Activated T-helper 2 cell treated with anti-CD3 and anti-CD28 coated beads, Interferon-gamma antibody, Interleukin-2, Interleukin-4, amounts not matched to agents 10 μg/mL and 5 μg/mL and 100 μg/mL, durations not matched to agents 14 hours and 24 hours and 36 hours (primary cell): ENCODE measurements at regions of chr11 and their contacts with region 1.

Region 1: GRCh38 chr11:64304316-64305072 is 830 bp upstream of the ESRRA start:
- DNase-seq: peak; percentile 88
- H3K4me3 Mint-ChIP-seq: peak overlapping the region; percentile 91
- H3K27ac Mint-ChIP-seq: peak overlapping the region; percentile 99
- H3K4me1 Mint-ChIP-seq: peaks cover 21% of the 10 kb centered on the region
- H3K27me3 Mint-ChIP-seq: peaks cover 14% of the 10 kb centered on the region

Region 2: DNA sequence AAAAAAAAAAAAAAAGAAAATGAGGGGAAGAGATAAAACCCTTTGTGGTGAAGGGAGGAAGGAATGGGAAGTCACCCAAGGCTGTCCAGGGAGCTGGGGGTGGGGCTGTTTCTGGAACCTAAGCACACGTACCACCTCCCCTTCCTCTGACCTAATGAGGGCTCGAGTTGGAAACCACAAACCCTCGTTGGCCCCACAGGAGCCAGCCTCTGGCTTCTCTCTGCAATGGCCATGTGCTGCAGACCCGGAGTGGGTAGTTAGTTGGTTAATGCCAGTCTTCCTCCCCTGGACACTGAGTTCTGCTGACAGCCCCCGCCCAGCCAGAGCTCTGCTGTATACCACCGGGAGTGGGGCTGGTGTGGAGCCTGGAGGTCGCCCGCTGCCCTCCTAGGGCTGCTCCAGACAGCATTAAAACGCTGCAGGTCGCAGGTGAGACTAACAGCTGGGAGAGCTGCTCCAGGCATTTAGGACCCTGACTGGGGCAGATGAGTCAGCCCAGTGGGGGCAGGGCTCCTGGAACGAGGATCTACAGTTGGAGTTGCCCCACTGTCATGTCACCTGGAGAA is 798.5 kb before region 1 on chr11 and contains the start of gene LGALS12:
- intact Hi-C with region 1: no loop called
- DNase-seq: no peak
- H3K4me3 Mint-ChIP-seq: no peak within 1 kb of the TSS
- H3K27ac Mint-ChIP-seq: no peak within 1 kb of the TSS
- H3K4me1 Mint-ChIP-seq: peaks cover 13% of the 10 kb centered on the region
- H3K27me3 Mint-ChIP-seq: peaks cover 8% of the 10 kb centered on the region
- total RNA-seq, gene LGALS12: 1.1 and 1.4 TPM in 2 replicates

Region 3: GRCh38 chr11:64185816-64186498 is 118.5 kb before region 1 on chr11 and contains the start of gene STIP1:
- intact Hi-C with region 1: loop called (anchors 2 kb)
- DNase-seq: peak; percentile 99
- H3K4me3 Mint-ChIP-seq: peak within 1 kb of the TSS; percentile 94
- H3K27ac Mint-ChIP-seq: peak within 1 kb of the TSS; percentile 98
- H3K4me1 Mint-ChIP-seq: peaks cover 33% of the 10 kb centered on the region
- H3K27me3 Mint-ChIP-seq: no peaks in the 10 kb centered on the region
- total RNA-seq, gene STIP1: 480 and 484 TPM in 2 replicates

Region 4: GRCh38 chr11:64240394-64241174 is 63.9 kb before region 1 on chr11 and contains the start of gene FKBP2:
- intact Hi-C with region 1: loop called (anchors 1 kb)
- DNase-seq: peak; percentile 98
- H3K4me3 Mint-ChIP-seq: peak within 1 kb of the TSS; percentile 94
- H3K27ac Mint-ChIP-seq: peak within 1 kb of the TSS; percentile 93
- H3K4me1 Mint-ChIP-seq: peaks cover 21% of the 10 kb centered on the region
- H3K27me3 Mint-ChIP-seq: no peaks in the 10 kb centered on the region
- total RNA-seq, gene FKBP2: 36.6 and 37.1 TPM in 2 replicates

Region 5: GRCh38 chr11:64269380-64270234 is 34.9 kb before region 1 on chr11:
- intact Hi-C with region 1: loop called (anchors 1 kb)
- DNase-seq: peak; percentile 97
- H3K4me3 Mint-ChIP-seq: peak overlapping the region; percentile 91
- H3K27ac Mint-ChIP-seq: peak overlapping the region; percentile 84
- H3K4me1 Mint-ChIP-seq: peaks cover 15% of the 10 kb centered on the region
- H3K27me3 Mint-ChIP-seq: no peaks in the 10 kb centered on the region

Region 6: DNA sequence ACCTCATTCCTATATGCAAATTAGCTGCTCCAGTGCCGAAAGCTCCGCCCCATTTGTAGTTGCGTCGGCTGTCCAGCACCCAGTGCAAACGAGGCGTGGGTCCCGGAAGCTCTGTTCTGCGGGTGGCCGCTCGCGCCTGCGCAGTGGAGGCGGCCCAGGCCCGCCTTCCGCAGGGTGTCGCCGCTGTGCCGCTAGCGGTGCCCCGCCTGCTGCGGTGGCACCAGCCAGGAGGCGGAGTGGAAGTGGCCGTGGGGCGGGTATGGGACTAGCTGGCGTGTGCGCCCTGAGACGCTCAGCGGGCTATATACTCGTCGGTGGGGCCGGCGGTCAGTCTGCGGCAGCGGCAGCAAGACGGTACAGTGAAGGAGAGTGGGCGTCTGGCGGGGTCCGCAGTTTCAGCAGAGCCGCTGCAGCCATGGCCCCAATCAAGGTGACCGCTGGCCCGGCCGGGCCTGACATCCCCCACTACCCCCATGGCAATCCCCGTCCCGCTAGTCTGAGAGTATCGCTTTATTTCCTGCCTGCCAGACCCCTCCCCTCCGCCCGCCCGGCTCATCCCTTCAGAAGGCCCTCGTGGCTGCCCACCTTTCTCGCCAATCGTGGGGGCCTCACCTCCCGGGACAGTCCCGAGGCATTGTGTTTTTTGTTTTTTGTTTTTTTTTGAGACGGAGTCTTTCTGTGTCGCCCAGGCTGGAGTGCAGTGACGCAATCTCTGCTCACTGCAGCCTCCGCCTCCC is 13.6 kb after region 1 on chr11 and contains the start of gene PRDX5:
- intact Hi-C with region 1: loop called (anchors 1 kb)
- DNase-seq: peak; percentile 95
- H3K4me3 Mint-ChIP-seq: peak within 1 kb of the TSS; percentile 96
- H3K27ac Mint-ChIP-seq: peak within 1 kb of the TSS; percentile 99
- H3K4me1 Mint-ChIP-seq: peaks cover 30% of the 10 kb centered on the region
- H3K27me3 Mint-ChIP-seq: no peaks in the 10 kb centered on the region
- total RNA-seq, gene PRDX5: 112 and 118 TPM in 2 replicates

Region 7: DNA sequence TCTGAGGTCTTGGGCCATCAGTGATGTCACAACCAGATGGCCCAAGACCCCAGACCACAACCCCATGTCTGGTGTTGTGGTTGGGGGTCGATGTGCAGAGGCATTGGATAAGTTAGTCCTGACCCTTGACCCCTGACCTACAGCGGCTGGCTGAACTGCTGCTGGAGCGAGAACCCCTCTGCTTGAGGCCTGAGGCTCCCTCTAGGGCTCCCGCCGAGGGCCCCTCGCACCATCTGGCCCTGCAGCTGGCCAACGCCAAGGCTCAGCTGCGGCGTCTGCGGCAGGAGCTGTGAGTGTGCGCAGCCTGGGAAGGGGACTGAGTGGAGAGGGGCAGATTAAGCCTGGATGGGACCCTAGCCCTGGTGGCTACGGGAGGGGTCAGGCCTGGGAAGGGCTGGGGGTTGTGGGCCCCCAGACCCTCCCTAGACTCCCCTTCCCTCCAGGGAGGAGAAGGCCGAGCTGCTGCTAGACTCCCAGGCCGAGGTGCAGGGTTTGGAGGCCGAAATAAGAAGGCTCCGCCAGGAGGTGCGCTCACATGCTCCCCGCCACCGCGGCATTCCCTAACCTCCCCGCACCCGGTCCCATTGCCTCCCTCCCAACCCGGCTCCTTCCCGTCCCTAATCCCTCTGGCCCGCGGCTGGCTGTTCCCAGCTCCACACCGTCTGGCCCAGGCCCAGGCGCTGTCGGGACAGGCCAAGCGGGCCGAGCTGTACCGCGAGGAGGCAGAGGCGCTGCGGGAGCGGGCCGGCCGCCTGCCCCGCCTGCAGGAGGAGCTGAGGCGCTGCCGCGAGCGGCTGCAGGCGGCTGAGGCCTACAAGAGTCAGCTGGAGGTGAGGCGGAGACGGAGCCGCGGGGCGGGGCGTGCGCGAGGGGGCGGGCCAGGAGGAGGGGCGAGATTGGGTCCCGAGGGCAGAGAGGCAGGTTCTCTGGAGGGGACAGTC is 37.6 kb after region 1 on chr11:
- intact Hi-C with region 1: loop called (anchors 5 kb)
- DNase-seq: peak; percentile 91
- H3K4me3 Mint-ChIP-seq: peak overlapping the region; percentile 26
- H3K27ac Mint-ChIP-seq: no peak overlapping the region
- H3K4me1 Mint-ChIP-seq: peaks cover 26% of the 10 kb centered on the region
- H3K27me3 Mint-ChIP-seq: no peaks in the 10 kb centered on the region